ENCODE measurements at regions of chr22 and their contacts with region 1.

Region 1: GRCh38 chr22:41222850-41223507 is 17.8 kb downstream of the CHADL start:
- DNase-seq: no peak
- ATAC-seq: no peak
- H3K4me3 Mint-ChIP-seq: no peak overlapping the region
- H3K27ac Mint-ChIP-seq: no peak overlapping the region
- H3K4me1 Mint-ChIP-seq: peaks cover 4% of the 10 kb centered on the region
- H3K27me3 Mint-ChIP-seq: no peaks in the 10 kb centered on the region

Region 2: DNA sequence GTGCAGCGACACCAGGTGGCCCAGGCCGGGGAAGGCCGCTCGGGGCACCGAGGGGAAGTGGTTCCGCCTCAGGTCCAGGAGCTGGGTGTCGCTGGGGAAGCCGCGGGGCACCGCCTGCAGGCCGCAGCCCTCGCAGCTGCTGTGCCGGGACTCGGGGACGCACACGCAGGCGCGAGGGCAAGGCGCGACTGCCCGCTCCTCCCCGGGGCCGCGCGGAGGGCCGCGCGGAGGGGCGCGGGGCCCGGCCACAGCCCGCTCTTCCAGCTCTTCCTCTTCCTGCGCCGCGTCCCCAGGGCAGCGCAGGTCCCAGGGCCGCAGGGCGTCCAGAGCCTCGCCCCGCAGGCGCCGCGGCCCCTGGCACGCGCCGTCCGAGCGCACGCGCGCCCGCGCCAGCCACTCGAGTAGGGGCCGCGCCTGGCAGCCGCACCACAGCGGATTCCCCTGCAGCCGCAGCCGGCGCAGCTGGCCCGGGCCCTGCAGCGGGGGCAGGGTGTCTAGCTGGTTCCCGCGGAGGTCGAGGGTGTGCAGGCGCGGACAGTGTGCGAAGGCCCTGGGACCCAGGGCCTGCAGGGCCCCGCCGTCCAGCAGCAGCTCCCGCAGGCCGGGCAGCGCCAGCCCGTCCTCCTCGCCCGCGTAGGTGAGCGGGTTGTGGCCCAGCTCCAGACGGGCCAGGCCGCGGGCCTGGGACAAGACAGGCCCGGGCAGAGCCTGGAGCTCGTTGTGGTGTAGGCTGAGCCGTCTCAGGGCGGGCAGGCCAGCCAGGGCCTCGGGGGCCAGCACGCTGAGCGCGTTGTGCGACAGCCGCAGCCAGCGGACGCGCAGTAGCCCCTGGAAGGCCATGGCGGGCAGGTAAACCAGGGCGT is 15.0 kb after region 1 on chr22:
- CTCF ChIA-PET with region 1: interaction called, 4 read pairs
- POLR2A ChIA-PET with region 1: interaction called, 11 read pairs
- intact Hi-C with region 1: no loop called
- DNase-seq: peak; percentile 91
- ATAC-seq: peak; percentile 98
- H3K4me3 Mint-ChIP-seq: peak overlapping the region; percentile 51
- H3K27ac Mint-ChIP-seq: no peak overlapping the region
- H3K4me1 Mint-ChIP-seq: peaks cover 7% of the 10 kb centered on the region
- H3K27me3 Mint-ChIP-seq: no peaks in the 10 kb centered on the region